Transverse colon (tissue), 4 donors: ENCODE measurements at regions of chr2 and their contacts with region 1.

Region 1: DNA sequence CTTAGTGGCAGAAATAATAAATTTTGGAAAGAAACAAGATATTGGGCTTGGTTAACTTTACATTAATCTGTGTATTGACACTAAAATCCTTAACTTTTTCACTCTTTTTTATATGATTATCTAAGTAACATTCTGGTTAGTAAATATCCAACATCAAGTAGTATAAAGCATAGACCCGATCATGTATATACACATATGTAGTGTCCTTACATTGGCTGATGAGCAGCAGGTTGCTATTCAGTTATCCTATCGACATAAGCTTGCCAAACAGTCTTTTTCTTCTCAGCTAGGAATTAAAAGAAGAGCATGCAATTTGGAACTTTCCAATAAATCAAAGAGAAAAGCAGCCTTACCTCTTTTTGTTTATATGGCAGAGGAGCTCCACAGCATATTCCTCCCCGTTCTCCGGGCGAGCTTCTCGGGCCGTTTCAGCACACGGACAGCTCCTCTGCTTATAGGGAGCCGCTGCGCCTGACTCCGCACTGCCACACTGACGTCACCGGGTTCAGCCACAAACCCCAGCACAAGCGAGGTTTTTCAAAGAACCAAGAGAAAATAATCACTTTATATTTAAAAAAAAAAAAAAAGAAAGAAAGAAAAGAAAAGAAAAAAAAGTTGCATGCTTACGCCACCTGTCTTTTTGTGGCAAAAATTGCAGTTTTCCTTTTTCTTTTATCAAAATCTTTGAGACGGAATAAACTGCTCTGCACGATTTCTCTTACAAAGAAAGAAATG is at the start of gene SCG2:
- DNase-seq: peak; percentile 41
- H3K4me3 ChIP-seq: peak within 1 kb of the TSS in 1 of 4 donors; percentile 12
- H3K27ac ChIP-seq: no peak within 1 kb of the TSS
- H3K4me1 ChIP-seq: peaks cover 0 to 8% (median 0%) of the 10 kb centered on the region in 4 donors
- H3K27me3 ChIP-seq: no peaks in the 10 kb centered on the region
- CTCF ChIP-seq: peak in 2 of 5 experiments; percentile 12 to 18
- EP300 ChIP-seq: no peak
- POLR2A ChIP-seq: no peak
- total RNA-seq, gene SCG2: 0.37 to 9.6 (median 4.5) TPM

Region 2: GRCh38 chr2:222982010-222982908 is 619.8 kb before region 1 on chr2:
- in situ Hi-C with region 1: loop called in 1 of 4 experiments (anchors 25 kb)
- intact Hi-C with region 1: no loop called
- DNase-seq: peak; percentile 18
- H3K4me3 ChIP-seq: no peak overlapping the region
- H3K27ac ChIP-seq: no peak overlapping the region
- H3K4me1 ChIP-seq: peaks cover 0 to 7% (median 2%) of the 10 kb centered on the region in 4 donors
- H3K27me3 ChIP-seq: no peaks in the 10 kb centered on the region
- CTCF ChIP-seq: peak; percentile 25 to 44 (median 34)
- EP300 ChIP-seq: no peak
- POLR2A ChIP-seq: no peak